Spleen (tissue), 13 donors: ENCODE measurements at regions of chr22 and their contacts with region 1.

Region 1: GRCh38 chr22:18001040-18001893 is 23.1 kb downstream of the MICAL3 start:
- DNase-seq: peak; percentile 94
- H3K4me3 ChIP-seq: peak overlapping the region; percentile 65 to 89 (median 82)
- H3K27ac ChIP-seq: peak overlapping the region; percentile 81 to 97 (median 94)
- H3K4me1 ChIP-seq: peaks cover 16 to 95% (median 76%) of the 10 kb centered on the region in 6 donors
- H3K27me3 ChIP-seq: peaks cover 0 to 15% (median 0%) of the 10 kb centered on the region in 7 donors
- CTCF ChIP-seq: peak in 9 of 11 experiments; percentile 8 to 67 (median 44)
- POLR2A ChIP-seq: peak in 1 of 3 donors; percentile 52

Region 2: DNA sequence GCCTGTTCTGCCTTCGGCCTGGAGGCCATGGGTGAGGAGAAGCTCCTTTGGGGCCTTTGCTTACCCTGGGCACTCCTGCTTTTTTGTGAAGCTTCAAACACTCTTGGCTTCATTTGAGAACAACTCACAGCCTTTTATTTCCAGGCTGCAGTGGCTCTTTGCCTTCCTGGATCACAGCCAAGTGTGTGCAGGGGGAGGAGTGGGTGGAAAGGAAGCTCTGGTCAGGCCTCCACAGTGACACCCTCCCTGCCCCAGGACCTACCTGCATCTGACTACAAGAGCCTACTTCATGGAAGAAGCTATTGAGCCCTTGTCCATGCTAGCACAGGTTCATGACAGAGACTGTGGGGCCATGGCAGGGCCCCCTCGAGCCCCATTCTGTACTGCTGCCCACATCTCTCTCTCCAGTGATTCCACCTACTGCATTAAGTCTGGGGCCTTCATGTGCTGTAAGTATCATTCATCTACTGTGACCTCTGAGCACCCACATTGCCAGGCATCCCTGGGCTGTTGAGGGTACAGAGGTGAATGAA is 1045.5 kb before region 1 on chr22:
- intact Hi-C with region 1: no loop called
- DNase-seq: no peak
- H3K4me3 ChIP-seq: no peak overlapping the region
- H3K27ac ChIP-seq: no peak overlapping the region
- H3K4me1 ChIP-seq: no peaks in the 10 kb centered on the region
- H3K27me3 ChIP-seq: no peaks in the 10 kb centered on the region
- CTCF ChIP-seq: no peak
- POLR2A ChIP-seq: no peak

Region 3: GRCh38 chr22:17773606-17774205 is 227.6 kb before region 1 on chr22:
- intact Hi-C with region 1: no loop called
- DNase-seq: peak; percentile 93
- H3K4me3 ChIP-seq: peak overlapping the region; percentile 66 to 95 (median 82)
- H3K27ac ChIP-seq: peak overlapping the region; percentile 77 to 98 (median 92)
- H3K4me1 ChIP-seq: peaks cover 57 to 96% (median 87%) of the 10 kb centered on the region in 6 donors
- H3K27me3 ChIP-seq: no peaks in the 10 kb centered on the region
- CTCF ChIP-seq: no peak
- POLR2A ChIP-seq: no peak

Region 4: DNA sequence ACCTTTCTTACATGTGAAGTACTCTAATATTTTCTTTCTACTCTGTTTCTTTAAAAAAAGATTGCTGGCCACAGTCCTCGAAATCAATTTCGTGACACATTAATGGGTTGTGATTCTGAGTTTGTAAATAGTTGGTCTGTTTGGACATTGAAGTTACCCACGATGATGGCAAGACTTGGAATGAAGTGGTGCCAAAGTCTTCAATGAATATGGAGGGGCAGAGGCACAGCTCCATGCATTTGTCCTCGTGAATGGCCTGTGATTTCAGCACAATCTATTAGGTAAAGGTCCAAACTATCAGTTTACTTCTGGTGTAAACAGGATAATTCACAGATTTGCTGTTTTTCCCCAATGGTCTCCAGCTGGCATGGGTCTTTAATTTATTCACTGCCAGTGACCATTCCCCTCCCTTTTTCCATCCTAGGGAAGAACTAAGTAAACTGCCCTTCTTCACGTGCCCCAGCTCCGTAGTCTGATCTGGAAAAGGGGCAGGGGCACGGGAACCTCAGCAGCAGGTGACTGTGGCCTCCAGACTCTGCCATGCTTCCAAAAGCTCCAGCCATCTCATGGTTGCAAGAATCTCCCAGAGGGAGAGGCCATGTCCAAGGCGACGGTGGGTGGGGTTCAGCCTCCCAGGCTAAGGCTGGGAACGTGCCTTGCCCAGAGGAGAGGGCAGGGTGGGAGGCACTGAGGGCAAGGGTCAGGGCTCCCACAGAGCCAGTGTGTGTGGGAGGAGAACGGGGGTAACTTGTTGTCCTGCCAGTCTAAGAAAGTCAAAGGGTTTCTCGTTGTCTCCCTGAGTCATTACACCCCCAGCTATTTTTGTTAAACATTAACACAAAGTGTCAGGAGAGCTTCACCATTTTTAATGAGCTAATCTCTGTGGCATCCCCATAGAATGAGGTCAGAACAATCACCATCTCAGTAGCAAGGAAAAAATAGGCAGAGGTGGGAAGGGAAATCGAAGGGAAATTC is 59.7 kb after region 1 on chr22:
- intact Hi-C with region 1: loop called (anchors 10 kb)
- DNase-seq: peak; percentile 68
- H3K4me3 ChIP-seq: no peak overlapping the region
- H3K27ac ChIP-seq: no peak overlapping the region
- H3K4me1 ChIP-seq: peaks cover 16 to 82% (median 49%) of the 10 kb centered on the region in 6 donors
- H3K27me3 ChIP-seq: peaks cover 0 to 8% (median 0%) of the 10 kb centered on the region in 7 donors
- CTCF ChIP-seq: no peak
- POLR2A ChIP-seq: no peak